ENCODE measurements at regions of chr4 and their contacts with region 1.

Region 1: DNA sequence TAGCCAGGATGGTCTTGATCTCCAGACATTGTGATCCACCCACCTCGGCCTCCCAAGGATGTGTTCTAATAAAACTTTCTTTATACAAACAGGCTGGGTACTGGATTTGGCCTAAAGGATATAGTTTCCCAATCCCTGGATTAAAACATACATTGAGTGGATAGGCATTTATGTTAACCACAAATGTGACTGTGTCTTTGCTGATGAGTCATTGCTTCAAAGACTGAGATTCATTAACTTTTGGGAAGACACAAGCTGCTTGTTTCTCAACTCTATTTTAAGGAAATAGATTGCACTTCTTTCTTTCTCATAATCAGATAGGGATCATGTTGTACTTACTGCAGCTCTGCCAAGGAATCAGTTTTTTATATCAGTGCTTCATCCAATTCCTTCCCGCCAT is 131.3 kb upstream of the AGA start:
- DNase-seq: peak in 1 of 2 experiments; percentile 73
- H3K4me3 ChIP-seq: no peak overlapping the region
- H3K27ac ChIP-seq: no peak overlapping the region
- H3K4me1 ChIP-seq: 0 out of 2 replicates have a peak, but pooled peaks cover 4% of the 10 kb centered on the region
- H3K27me3 ChIP-seq: no peaks in the 10 kb centered on the region
- CTCF ChIP-seq: no peak

Region 2: GRCh38 chr4:177528620-177529019 is 44.9 kb before region 1 on chr4:
- CTCF ChIA-PET with region 1: no interaction called
- POLR2A ChIA-PET with region 1: no interaction called
- intact Hi-C with region 1: no loop called
- DNase-seq: no peak
- H3K4me3 ChIP-seq: no peak overlapping the region
- H3K27ac ChIP-seq: no peak overlapping the region
- H3K4me1 ChIP-seq: no peaks in the 10 kb centered on the region
- H3K27me3 ChIP-seq: no peaks in the 10 kb centered on the region
- CTCF ChIP-seq: no peak

Region 3: GRCh38 chr4:177728361-177729152 is 155.1 kb after region 1 on chr4:
- CTCF ChIA-PET with region 1: no interaction called
- POLR2A ChIA-PET with region 1: no interaction called
- intact Hi-C with region 1: loop called (anchors 10 kb)
- DNase-seq: peak; percentile 72 to 75
- H3K4me3 ChIP-seq: no peak overlapping the region
- H3K27ac ChIP-seq: peak overlapping the region; percentile 55; the same call in 1 of the 2 replicates
- H3K4me1 ChIP-seq: peaks cover 5% of the 10 kb centered on the region; the same call in 1 of the 2 replicates
- H3K27me3 ChIP-seq: no peaks in the 10 kb centered on the region
- CTCF ChIP-seq: 0 out of 2 replicates have a peak, but pooled peaks have one; percentile 31